Colonic mucosa (tissue), 4 donors: ENCODE measurements at regions of chr2 and their contacts with region 1.

Region 1: DNA sequence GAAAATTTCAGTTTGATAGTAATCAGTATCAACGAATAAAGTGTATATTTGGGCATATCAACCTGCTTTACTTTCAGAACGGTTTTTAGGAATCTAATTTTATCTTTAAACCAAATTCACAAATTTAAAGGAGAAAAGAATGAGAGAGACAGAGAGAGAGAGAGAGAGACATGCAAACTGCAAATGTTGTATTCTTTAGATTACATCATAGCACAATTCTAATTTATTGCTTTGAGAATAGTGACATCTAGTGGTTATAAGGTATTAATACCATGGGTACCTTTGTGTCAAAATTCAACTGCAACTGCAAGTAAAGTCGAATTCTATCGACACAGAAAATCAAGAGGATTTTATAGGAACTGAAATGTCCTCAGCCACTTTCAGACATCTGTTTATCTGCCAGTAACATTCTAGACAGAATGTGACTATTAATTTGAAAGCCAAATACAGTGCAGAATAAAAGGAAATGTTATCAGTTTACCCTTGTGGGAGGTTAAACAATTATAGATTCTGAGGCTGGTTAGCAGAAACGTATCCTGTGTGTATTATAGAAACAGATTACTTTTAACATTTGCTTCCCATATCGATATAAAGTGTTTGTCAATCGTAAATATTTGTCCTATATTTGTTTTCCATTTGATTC is 529.8 kb upstream of the VRK2 start:
- DNase-seq: no peak
- H3K4me3 ChIP-seq: no peak overlapping the region
- H3K27ac ChIP-seq: no peak overlapping the region
- H3K4me1 ChIP-seq: no peaks in the 10 kb centered on the region
- H3K27me3 ChIP-seq: no peaks in the 10 kb centered on the region
- CTCF ChIP-seq: peak; percentile 49

Region 2: DNA sequence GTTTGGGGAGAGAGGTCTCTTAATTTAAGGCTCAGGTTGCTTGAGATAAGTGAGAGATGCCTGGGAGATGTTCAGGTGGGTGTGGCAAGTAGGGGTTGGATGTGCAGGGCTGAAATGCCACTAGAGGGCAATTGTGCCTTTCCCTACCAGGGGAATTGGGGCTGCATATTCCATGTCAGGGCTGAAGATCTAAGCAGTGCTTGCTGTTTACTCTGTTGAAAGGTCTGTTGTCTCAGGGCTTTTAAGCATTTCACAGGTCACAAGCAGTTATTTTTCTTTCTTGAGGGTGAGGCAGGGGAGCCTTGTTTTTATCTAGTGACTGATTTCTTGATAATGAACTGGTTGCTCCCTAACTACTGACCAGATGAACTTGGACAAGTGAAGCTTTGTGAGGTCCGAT is 1325.1 kb before region 1 on chr2:
- intact Hi-C with region 1: loop called (anchors 5 kb)
- DNase-seq: peak; percentile 30
- H3K4me3 ChIP-seq: no peak overlapping the region
- H3K27ac ChIP-seq: no peak overlapping the region
- H3K4me1 ChIP-seq: no peaks in the 10 kb centered on the region
- H3K27me3 ChIP-seq: peaks cover 6% of the 10 kb centered on the region
- CTCF ChIP-seq: no peak

Region 3: DNA sequence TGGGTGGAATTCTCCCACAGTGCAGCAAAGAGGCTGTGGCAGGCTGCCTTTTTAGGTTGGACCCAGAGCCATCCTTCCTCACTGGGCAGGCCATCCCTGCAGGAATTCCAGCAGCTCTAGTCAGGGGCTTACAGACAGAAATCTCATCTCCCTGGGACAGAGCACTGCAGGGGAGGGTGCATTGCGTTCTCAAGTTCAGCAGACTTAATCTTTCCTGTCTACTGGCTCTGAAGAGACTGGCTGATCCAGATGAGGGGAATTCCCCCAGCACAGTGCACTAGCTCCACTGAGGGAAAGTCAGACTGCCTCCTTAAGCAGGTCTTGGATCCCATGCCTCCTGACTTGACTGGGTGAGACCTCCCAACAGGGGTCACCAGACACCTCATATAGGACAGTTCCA is 369.9 kb before region 1 on chr2:
- intact Hi-C with region 1: no loop called
- DNase-seq: no peak
- H3K4me3 ChIP-seq: no peak overlapping the region
- H3K27ac ChIP-seq: no peak overlapping the region
- H3K4me1 ChIP-seq: no peaks in the 10 kb centered on the region
- H3K27me3 ChIP-seq: no peaks in the 10 kb centered on the region
- CTCF ChIP-seq: no peak

Region 4: DNA sequence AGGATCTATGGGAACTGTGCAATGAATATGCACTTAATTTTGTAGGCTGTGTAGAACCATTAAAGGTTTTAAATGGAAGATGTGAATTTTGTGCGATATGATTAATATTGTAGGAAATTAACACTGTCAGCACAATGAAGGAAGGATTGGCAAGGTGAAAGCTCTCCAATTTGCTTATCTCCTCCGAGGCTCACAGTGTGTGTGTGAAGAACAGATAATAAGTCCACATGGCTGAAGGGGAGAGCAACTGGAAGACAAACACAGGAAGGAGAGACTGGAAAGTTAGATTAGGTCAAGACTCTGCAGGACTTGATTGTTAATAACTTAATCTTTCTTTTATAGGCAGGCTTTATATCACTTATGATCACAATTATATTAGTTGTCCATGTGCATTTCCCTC is 260.1 kb after region 1 on chr2:
- intact Hi-C with region 1: no loop called
- DNase-seq: no peak
- H3K4me3 ChIP-seq: no peak overlapping the region
- H3K27ac ChIP-seq: no peak overlapping the region
- H3K4me1 ChIP-seq: no peaks in the 10 kb centered on the region
- H3K27me3 ChIP-seq: no peaks in the 10 kb centered on the region
- CTCF ChIP-seq: no peak

Region 5: GRCh38 chr2:57890464-57890863 is 373.6 kb after region 1 on chr2:
- intact Hi-C with region 1: no loop called
- DNase-seq: no peak
- H3K4me3 ChIP-seq: no peak overlapping the region
- H3K27ac ChIP-seq: no peak overlapping the region
- H3K4me1 ChIP-seq: no peaks in the 10 kb centered on the region
- H3K27me3 ChIP-seq: no peaks in the 10 kb centered on the region
- CTCF ChIP-seq: no peak